ENCODE measurements at regions of chr1 and their contacts with region 1.

Region 1: GRCh38 chr1:1906185-1907097 is 8.6 kb upstream of the CALML6 start:
- DNase-seq: peak; percentile 80 to 83
- ATAC-seq: peak; percentile 88 to 89
- H3K4me3 ChIP-seq: no peak overlapping the region
- H3K27ac ChIP-seq: peak overlapping the region; percentile 63 to 92; a peak in 5 of 6 replicates
- H3K4me1 ChIP-seq: peaks cover 25% of the 10 kb centered on the region
- CTCF ChIP-seq: peak; percentile 69
- EP300 ChIP-seq: no peak
- POLR2A ChIP-seq: no peak
- RAD21 ChIP-seq: peak; percentile 82 to 93

Region 2: GRCh38 chr1:1777950-1778662 is 128.3 kb before region 1 on chr1 and contains the start of gene NADK:
- CTCF ChIA-PET with region 1: interaction called, 12 read pairs
- POLR2A ChIA-PET with region 1: no interaction called
- DNase-seq: peak; percentile 45 to 52
- ATAC-seq: peak; percentile 43 to 66
- H3K4me3 ChIP-seq: peak within 1 kb of the TSS; percentile 78
- H3K27ac ChIP-seq: peak within 1 kb of the TSS; percentile 99
- H3K4me1 ChIP-seq: peaks cover 39% of the 10 kb centered on the region
- CTCF ChIP-seq: no peak
- EP300 ChIP-seq: no peak
- POLR2A ChIP-seq: peak; percentile 68
- RAD21 ChIP-seq: peak in 1 of 2 experiments; percentile 22; a peak in 1 of 5 replicates
- polyA plus RNA-seq, gene NADK: 32.9 and 35.8 TPM in 2 replicates

Region 3: GRCh38 chr1:1788646-1789431 is 117.6 kb before region 1 on chr1:
- CTCF ChIA-PET with region 1: interaction called, 22 read pairs
- POLR2A ChIA-PET with region 1: interaction called, 4 read pairs
- DNase-seq: peak; percentile 28 to 53
- ATAC-seq: peak; percentile 26 to 62; a peak in 3 of 6 replicates
- H3K4me3 ChIP-seq: no peak overlapping the region
- H3K27ac ChIP-seq: no peak overlapping the region
- H3K4me1 ChIP-seq: no peaks in the 10 kb centered on the region
- CTCF ChIP-seq: no peak; the same call in 2 of the 3 replicates
- EP300 ChIP-seq: no peak
- POLR2A ChIP-seq: no peak
- RAD21 ChIP-seq: peak in 1 of 2 experiments; percentile 16; a peak in 1 of 5 replicates

Region 4: DNA sequence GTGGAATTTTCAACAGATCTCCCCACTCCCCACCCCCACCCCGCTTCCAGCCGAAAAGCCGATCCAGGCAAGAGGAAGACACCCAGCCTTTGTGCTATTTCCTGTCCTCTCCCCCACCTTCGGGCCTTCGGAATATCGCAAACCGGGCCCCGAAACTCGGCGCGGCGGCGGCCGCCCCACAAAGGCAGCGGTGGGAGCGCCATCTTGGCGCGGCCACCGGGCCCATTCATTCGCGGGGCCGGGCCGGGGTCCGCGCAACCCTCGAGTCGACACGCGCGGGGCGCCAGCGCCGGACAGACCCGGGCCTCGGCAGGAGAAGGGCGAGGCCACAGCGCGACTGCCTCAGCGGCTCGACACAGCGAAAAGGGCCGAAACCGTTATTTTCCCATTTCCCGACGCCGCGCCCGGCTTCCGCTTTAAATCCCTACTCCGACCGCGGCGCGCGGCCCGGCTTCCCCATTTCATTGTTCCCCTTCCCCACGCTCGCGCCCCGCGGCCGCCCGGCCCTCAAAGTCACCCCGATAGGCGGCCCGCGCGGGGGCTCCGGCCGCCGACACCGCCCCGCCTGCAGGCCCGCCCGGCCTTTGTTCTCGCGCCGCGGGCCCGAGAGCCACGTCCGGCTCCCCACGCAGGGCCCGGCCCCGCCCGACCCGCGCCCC is 16.5 kb before region 1 on chr1:
- CTCF ChIA-PET with region 1: interaction called, 40 read pairs
- POLR2A ChIA-PET with region 1: no interaction called
- DNase-seq: peak in 1 of 2 experiments; percentile 46
- ATAC-seq: peak; percentile 20 to 27; a peak in 5 of 6 replicates
- H3K4me3 ChIP-seq: peak overlapping the region; percentile 89
- H3K27ac ChIP-seq: peak overlapping the region; percentile 97 to 100
- H3K4me1 ChIP-seq: peaks cover 35% of the 10 kb centered on the region
- CTCF ChIP-seq: no peak
- EP300 ChIP-seq: no peak
- POLR2A ChIP-seq: no peak
- RAD21 ChIP-seq: no peak

Region 5: DNA sequence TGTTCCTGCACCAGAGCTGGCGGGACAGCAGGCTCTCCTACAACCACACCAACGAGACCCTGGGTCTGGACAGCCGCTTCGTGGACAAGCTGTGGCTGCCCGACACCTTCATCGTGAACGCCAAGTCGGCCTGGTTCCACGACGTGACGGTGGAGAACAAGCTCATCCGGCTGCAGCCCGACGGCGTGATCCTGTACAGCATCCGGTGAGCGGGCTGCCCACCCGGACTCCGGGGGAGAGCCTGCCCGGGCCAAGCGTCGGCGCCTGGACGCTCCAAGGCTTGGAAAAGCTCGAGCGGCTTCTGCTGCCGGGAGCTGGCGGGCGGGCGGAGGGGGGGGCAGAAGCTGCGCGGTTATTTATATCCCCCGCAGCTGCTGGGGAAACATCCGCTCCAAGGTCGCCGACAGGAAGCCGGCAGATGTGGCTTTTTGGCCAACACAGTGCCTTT is 119.1 kb after region 1 on chr1:
- CTCF ChIA-PET with region 1: no interaction called
- POLR2A ChIA-PET with region 1: no interaction called
- DNase-seq: no peak
- ATAC-seq: no peak
- H3K4me3 ChIP-seq: no peak overlapping the region
- H3K27ac ChIP-seq: no peak overlapping the region
- H3K4me1 ChIP-seq: no peaks in the 10 kb centered on the region
- CTCF ChIP-seq: no peak
- EP300 ChIP-seq: no peak
- POLR2A ChIP-seq: no peak
- RAD21 ChIP-seq: no peak

Measured in A549 (cell line).